ENCODE measurements at regions of chr4 and their contacts with region 1.

Region 1: GRCh38 chr4:125432104-125432503 is 117.3 kb downstream of the FAT4 start:
- DNase-seq: peak in 1 of 2 experiments; percentile 47
- H3K4me3 ChIP-seq: no peak overlapping the region
- H3K27ac ChIP-seq: no peak overlapping the region
- H3K4me1 ChIP-seq: no peaks in the 10 kb centered on the region
- H3K27me3 ChIP-seq: no peaks in the 10 kb centered on the region
- CTCF ChIP-seq: no peak

Region 2: DNA sequence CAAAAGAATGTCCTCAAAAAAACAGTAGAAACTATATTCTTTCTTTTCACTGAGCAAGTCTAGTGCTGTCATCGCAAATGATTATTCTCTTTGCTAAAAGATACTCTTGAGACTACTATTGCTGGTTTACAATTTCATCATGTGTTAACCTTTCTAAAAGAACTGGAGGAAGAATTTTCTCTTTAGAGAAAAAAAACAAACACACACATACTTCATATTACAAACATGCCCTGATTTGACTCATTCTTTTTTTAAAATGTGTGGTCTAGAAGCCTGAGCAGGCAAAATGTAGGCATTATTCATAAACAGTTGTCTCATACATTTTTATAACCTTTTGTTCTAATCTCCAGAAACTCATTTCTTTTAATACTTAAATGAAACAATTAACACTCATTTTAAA is 178.0 kb before region 1 on chr4:
- CTCF ChIA-PET with region 1: no interaction called
- POLR2A ChIA-PET with region 1: no interaction called
- intact Hi-C with region 1: no loop called
- DNase-seq: no peak
- H3K4me3 ChIP-seq: no peak overlapping the region
- H3K27ac ChIP-seq: no peak overlapping the region
- H3K4me1 ChIP-seq: no peaks in the 10 kb centered on the region
- H3K27me3 ChIP-seq: no peaks in the 10 kb centered on the region
- CTCF ChIP-seq: no peak

Region 3: DNA sequence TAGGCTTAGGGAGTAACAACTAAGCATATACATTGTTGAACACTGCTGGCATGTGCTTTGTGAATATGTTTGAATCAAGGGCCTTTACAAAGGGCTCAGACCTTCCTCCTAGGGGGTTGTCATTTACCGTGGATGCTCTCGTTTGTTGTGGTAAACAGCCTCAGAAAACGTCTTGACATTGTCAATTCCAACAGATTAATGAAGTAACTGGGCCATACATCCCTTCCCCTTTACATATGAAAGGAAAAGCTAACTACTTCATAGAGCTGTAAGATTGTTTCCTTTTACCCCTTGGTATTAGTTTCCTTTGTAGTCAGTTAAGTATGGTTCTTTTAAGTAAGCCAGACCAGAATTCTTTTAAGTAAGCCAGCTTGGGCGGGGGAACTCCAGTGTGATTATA is 74.4 kb before region 1 on chr4:
- CTCF ChIA-PET with region 1: no interaction called
- POLR2A ChIA-PET with region 1: no interaction called
- intact Hi-C with region 1: no loop called
- DNase-seq: no peak
- H3K4me3 ChIP-seq: no peak overlapping the region
- H3K27ac ChIP-seq: no peak overlapping the region
- H3K4me1 ChIP-seq: no peaks in the 10 kb centered on the region
- H3K27me3 ChIP-seq: no peaks in the 10 kb centered on the region
- CTCF ChIP-seq: no peak

Region 4: GRCh38 chr4:125397226-125397625 is 34.9 kb before region 1 on chr4:
- CTCF ChIA-PET with region 1: no interaction called
- POLR2A ChIA-PET with region 1: no interaction called
- intact Hi-C with region 1: no loop called
- DNase-seq: no peak
- H3K4me3 ChIP-seq: no peak overlapping the region
- H3K27ac ChIP-seq: no peak overlapping the region
- H3K4me1 ChIP-seq: no peaks in the 10 kb centered on the region
- H3K27me3 ChIP-seq: no peaks in the 10 kb centered on the region
- CTCF ChIP-seq: no peak

Region 5: GRCh38 chr4:125728568-125728967 is 296.5 kb after region 1 on chr4:
- CTCF ChIA-PET with region 1: no interaction called
- POLR2A ChIA-PET with region 1: no interaction called
- intact Hi-C with region 1: no loop called
- DNase-seq: peak; percentile 39 to 49
- H3K4me3 ChIP-seq: no peak overlapping the region
- H3K27ac ChIP-seq: no peak overlapping the region
- H3K4me1 ChIP-seq: no peaks in the 10 kb centered on the region
- H3K27me3 ChIP-seq: no peaks in the 10 kb centered on the region
- CTCF ChIP-seq: no peak

Region 6: GRCh38 chr4:125741825-125742452 is 309.8 kb after region 1 on chr4:
- CTCF ChIA-PET with region 1: no interaction called
- POLR2A ChIA-PET with region 1: interaction called, 13 read pairs
- intact Hi-C with region 1: no loop called
- DNase-seq: no peak
- H3K4me3 ChIP-seq: no peak overlapping the region
- H3K27ac ChIP-seq: no peak overlapping the region
- H3K4me1 ChIP-seq: no peaks in the 10 kb centered on the region
- H3K27me3 ChIP-seq: no peaks in the 10 kb centered on the region
- CTCF ChIP-seq: peak; percentile 83